ENCODE measurements at regions of chr9 and their contacts with region 1.

Region 1: GRCh38 chr9:38047301-38048251 is 21.5 kb downstream of the SHB start:
- DNase-seq: peak; percentile 72
- H3K4me3 ChIP-seq: peak overlapping the region; percentile 43
- H3K27ac ChIP-seq: peak overlapping the region; percentile 97
- H3K27me3 ChIP-seq: no peaks in the 10 kb centered on the region
- CTCF ChIP-seq: no peak

Region 2: GRCh38 chr9:37903647-37904444 is 143.7 kb before region 1 on chr9 and contains the start of gene SLC25A51:
- CTCF ChIA-PET with region 1: interaction called, 11 read pairs
- POLR2A ChIA-PET with region 1: no interaction called
- DNase-seq: peak; percentile 77
- H3K4me3 ChIP-seq: peak within 1 kb of the TSS; percentile 83
- H3K27ac ChIP-seq: peak within 1 kb of the TSS; percentile 67
- H3K27me3 ChIP-seq: no peaks in the 10 kb centered on the region
- CTCF ChIP-seq: peak; percentile 94
- polyA plus RNA-seq, gene SLC25A51: 27.7 and 29.9 TPM in 2 replicates

Region 3: DNA sequence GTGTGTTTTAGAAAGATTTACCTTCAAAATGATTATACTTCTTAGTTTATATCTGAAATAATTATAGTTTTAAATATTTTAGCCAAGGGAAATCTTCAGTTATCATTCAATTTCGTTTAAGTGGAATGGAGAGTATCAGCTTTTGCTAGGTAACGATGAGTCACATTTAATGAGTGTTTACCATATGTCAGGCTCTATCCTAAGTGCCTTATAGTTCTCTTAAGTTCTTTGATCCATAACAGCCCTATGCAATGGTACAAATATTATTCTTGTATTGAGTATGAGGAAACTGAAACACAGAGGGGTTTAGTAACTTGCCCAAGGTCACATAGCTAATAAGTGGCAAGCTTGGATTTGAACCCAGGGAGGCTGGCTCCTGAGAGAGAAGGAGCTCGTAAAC is 58.9 kb after region 1 on chr9:
- CTCF ChIA-PET with region 1: no interaction called
- POLR2A ChIA-PET with region 1: no interaction called
- DNase-seq: no peak
- H3K4me3 ChIP-seq: no peak overlapping the region
- H3K27ac ChIP-seq: no peak overlapping the region
- H3K27me3 ChIP-seq: peaks cover 28% of the 10 kb centered on the region
- CTCF ChIP-seq: no peak

Region 4: GRCh38 chr9:38141746-38142591 is 94.4 kb after region 1 on chr9:
- CTCF ChIA-PET with region 1: no interaction called
- POLR2A ChIA-PET with region 1: no interaction called
- DNase-seq: peak; percentile 33
- H3K4me3 ChIP-seq: peak overlapping the region; percentile 38
- H3K27ac ChIP-seq: peak overlapping the region; percentile 83
- H3K27me3 ChIP-seq: peaks cover 10% of the 10 kb centered on the region
- CTCF ChIP-seq: no peak